A673 (cell line): ENCODE measurements at regions of chr2 and their contacts with region 1.

Region 1: GRCh38 chr2:44515416-44515815 is 153.7 kb downstream of the CAMKMT start:
- DNase-seq: no peak
- H3K4me3 ChIP-seq: no peak overlapping the region
- H3K27ac ChIP-seq: no peak overlapping the region
- H3K4me1 ChIP-seq: no peaks in the 10 kb centered on the region
- H3K27me3 ChIP-seq: no peaks in the 10 kb centered on the region
- CTCF ChIP-seq: no peak

Region 2: GRCh38 chr2:44686561-44686960 is 171.1 kb after region 1 on chr2:
- CTCF ChIA-PET with region 1: no interaction called
- POLR2A ChIA-PET with region 1: interaction called, 10 read pairs
- intact Hi-C with region 1: no loop called
- DNase-seq: no peak
- H3K4me3 ChIP-seq: no peak overlapping the region
- H3K27ac ChIP-seq: no peak overlapping the region
- H3K4me1 ChIP-seq: no peaks in the 10 kb centered on the region
- H3K27me3 ChIP-seq: no peaks in the 10 kb centered on the region
- CTCF ChIP-seq: no peak